ENCODE measurements at regions of chr14 and their contacts with region 1.

Region 1: DNA sequence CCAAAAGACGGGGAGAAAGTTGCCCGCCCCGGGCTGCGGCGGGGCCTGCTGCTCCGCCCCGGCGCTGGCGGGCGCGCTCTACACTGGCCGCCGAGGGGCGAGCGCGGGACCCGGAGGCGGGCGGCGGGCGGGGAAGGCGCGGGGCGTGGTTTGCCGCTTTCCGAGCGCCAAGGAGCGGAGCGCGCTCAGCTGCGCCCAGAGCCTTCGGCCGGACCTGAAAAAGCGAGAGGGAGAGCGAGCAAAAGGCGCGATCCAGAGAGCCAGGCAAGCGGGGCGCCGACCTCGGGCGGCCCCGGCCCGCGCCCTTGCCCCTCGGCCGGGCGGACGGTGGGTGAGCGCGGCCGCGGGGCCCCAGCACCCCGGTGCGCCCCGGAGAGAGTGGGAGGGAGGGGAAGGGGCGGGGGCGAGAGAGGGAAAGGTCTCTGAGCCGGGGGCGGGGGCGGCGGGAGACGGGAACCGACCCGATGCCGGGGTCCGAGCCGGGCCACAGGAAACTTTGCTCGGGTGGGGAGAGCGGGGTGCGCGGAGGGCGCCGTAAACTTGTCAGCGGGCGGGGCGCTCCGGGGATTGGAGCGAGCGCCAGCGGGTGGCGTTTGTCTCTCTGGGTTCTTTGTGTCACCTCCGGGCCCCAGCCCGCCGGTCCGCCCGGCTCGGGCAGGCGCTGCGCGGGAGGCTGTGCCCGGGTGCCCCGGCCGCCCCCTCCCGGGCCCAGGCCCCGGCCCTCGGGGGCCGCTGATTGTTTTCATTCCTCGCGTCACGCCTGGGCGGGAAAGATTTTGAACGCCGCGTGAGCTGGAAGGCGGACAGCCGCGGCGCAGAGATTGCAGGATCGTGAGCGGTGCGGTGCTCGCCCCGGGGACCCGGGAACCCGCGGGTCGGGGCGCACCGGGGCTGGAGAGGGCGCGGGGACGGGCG is at the start of gene SYNE2:
- DNase-seq: peak; percentile 67 to 89 (median 80)
- ATAC-seq: peak; percentile 90
- H3K4me3 ChIP-seq: peak within 1 kb of the TSS; percentile 52
- H3K4me3 Mint-ChIP-seq: peak within 1 kb of the TSS; percentile 85 to 99 (median 98)
- H3K27ac ChIP-seq: peak within 1 kb of the TSS; percentile 72
- H3K27ac Mint-ChIP-seq: peak within 1 kb of the TSS; percentile 77 to 98 (median 91)
- H3K4me1 ChIP-seq: peaks cover 29 to 39% of the 10 kb centered on the region in 2 donors
- H3K4me1 Mint-ChIP-seq: peaks cover 30 to 44% (median 42%) of the 10 kb centered on the region in 7 donors
- H3K27me3 ChIP-seq: no peaks in the 10 kb centered on the region
- H3K27me3 Mint-ChIP-seq: peaks cover 0 to 25% (median 0%) of the 10 kb centered on the region in 5 donors
- total RNA-seq, gene SYNE2: 77.7 to 170 (median 149) TPM

Region 2: GRCh38 chr14:63867933-63868921 is 15.2 kb after region 1 on chr14:
- CTCF ChIA-PET with region 1: interaction called, 3 read pairs
- POLR2A ChIA-PET with region 1: interaction called, 45 read pairs
- intact Hi-C with region 1: loop called (anchors 1 kb)
- DNase-seq: peak in 6 of 9 donors; percentile 15 to 44 (median 28)
- ATAC-seq: no peak
- H3K4me3 ChIP-seq: no peak overlapping the region
- H3K4me3 Mint-ChIP-seq: peak overlapping the region; percentile 46 to 84 (median 75)
- H3K27ac ChIP-seq: peak overlapping the region; percentile 36
- H3K27ac Mint-ChIP-seq: peak overlapping the region; percentile 84 to 98 (median 92)
- H3K4me1 ChIP-seq: peaks cover 36 to 60% of the 10 kb centered on the region in 2 donors
- H3K4me1 Mint-ChIP-seq: peaks cover 37 to 78% (median 64%) of the 10 kb centered on the region in 7 donors
- H3K27me3 ChIP-seq: no peaks in the 10 kb centered on the region
- H3K27me3 Mint-ChIP-seq: no peaks in the 10 kb centered on the region

Region 3: GRCh38 chr14:63887899-63888298 is 34.8 kb after region 1 on chr14:
- CTCF ChIA-PET with region 1: no interaction called
- POLR2A ChIA-PET with region 1: interaction called, 4 read pairs
- intact Hi-C with region 1: loop called in 1 of 2 experiments (anchors 5 kb)
- DNase-seq: no peak
- ATAC-seq: no peak
- H3K4me3 ChIP-seq: no peak overlapping the region
- H3K4me3 Mint-ChIP-seq: no peak overlapping the region
- H3K27ac ChIP-seq: no peak overlapping the region
- H3K27ac Mint-ChIP-seq: no peak overlapping the region
- H3K4me1 ChIP-seq: peaks cover 0 to 3% of the 10 kb centered on the region in 2 donors
- H3K4me1 Mint-ChIP-seq: peaks cover 10 to 32% (median 19%) of the 10 kb centered on the region in 7 donors
- H3K27me3 ChIP-seq: no peaks in the 10 kb centered on the region
- H3K27me3 Mint-ChIP-seq: no peaks in the 10 kb centered on the region

Region 4: DNA sequence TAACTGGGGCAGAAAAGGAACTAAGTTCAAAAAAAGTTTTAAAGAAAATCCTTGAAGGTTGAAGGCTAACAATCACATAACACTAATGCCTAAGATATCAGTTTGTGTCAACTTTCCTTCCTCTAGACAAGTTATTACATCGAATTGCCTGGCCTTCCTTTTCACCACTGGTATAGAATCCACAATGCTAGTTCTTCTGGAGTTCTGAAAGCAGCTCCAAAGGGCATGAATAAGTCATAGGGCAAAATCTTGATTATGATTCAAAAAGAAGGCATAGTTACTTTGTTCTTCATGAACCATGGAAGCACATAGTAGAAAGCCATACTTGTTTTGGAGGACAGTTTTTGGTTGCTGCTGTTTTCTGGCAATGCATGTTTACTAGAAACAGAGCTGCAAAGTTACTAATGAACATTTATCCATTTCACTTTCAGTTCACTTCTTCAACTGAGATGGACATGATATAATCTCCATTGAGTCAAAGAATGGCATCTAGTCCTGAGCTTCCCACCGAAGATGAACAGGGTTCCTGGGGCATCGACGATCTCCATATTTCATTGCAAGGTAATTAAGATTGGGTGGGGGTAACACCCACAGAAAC is 55.7 kb after region 1 on chr14:
- CTCF ChIA-PET with region 1: no interaction called
- POLR2A ChIA-PET with region 1: no interaction called
- intact Hi-C with region 1: loop called in 1 of 2 experiments (anchors 2 kb)
- DNase-seq: no peak
- ATAC-seq: no peak
- H3K4me3 ChIP-seq: no peak overlapping the region
- H3K4me3 Mint-ChIP-seq: peak overlapping the region in 9 of 10 donors; percentile 40 to 79 (median 71)
- H3K27ac ChIP-seq: no peak overlapping the region
- H3K27ac Mint-ChIP-seq: peak overlapping the region in 6 of 9 donors; percentile 4 to 79 (median 54)
- H3K4me1 ChIP-seq: peaks cover 0 to 14% of the 10 kb centered on the region in 2 donors
- H3K4me1 Mint-ChIP-seq: peaks cover 25 to 65% (median 48%) of the 10 kb centered on the region in 7 donors
- H3K27me3 ChIP-seq: no peaks in the 10 kb centered on the region
- H3K27me3 Mint-ChIP-seq: peaks cover 0 to 5% (median 0%) of the 10 kb centered on the region in 5 donors

Region 5: GRCh38 chr14:63993992-63994391 is 140.9 kb after region 1 on chr14:
- CTCF ChIA-PET with region 1: interaction called, 3 read pairs
- POLR2A ChIA-PET with region 1: no interaction called
- intact Hi-C with region 1: loop called (anchors 1 to 5 kb)
- DNase-seq: peak in 6 of 9 donors; percentile 17 to 36 (median 18)
- ATAC-seq: no peak
- H3K4me3 ChIP-seq: no peak overlapping the region
- H3K4me3 Mint-ChIP-seq: no peak overlapping the region
- H3K27ac ChIP-seq: no peak overlapping the region
- H3K27ac Mint-ChIP-seq: no peak overlapping the region
- H3K4me1 ChIP-seq: no peaks in the 10 kb centered on the region
- H3K4me1 Mint-ChIP-seq: peaks cover 0 to 12% (median 0%) of the 10 kb centered on the region in 7 donors
- H3K27me3 ChIP-seq: no peaks in the 10 kb centered on the region
- H3K27me3 Mint-ChIP-seq: no peaks in the 10 kb centered on the region

Region 6: GRCh38 chr14:64387694-64388532 is 534.8 kb after region 1 on chr14 and contains the start of gene MTHFD1:
- CTCF ChIA-PET with region 1: no interaction called
- POLR2A ChIA-PET with region 1: no interaction called
- intact Hi-C with region 1: loop called in 1 of 2 experiments (anchors 1 kb)
- DNase-seq: peak; percentile 93 to 97 (median 96)
- ATAC-seq: peak; percentile 90
- H3K4me3 ChIP-seq: peak within 1 kb of the TSS; percentile 89
- H3K4me3 Mint-ChIP-seq: peak within 1 kb of the TSS; percentile 92 to 99 (median 96)
- H3K27ac ChIP-seq: peak within 1 kb of the TSS; percentile 79
- H3K27ac Mint-ChIP-seq: peak within 1 kb of the TSS; percentile 90 to 99 (median 95)
- H3K4me1 ChIP-seq: peaks cover 11 to 17% of the 10 kb centered on the region in 2 donors
- H3K4me1 Mint-ChIP-seq: peaks cover 18 to 49% (median 41%) of the 10 kb centered on the region in 7 donors
- H3K27me3 ChIP-seq: no peaks in the 10 kb centered on the region
- H3K27me3 Mint-ChIP-seq: peaks cover 0 to 4% (median 0%) of the 10 kb centered on the region in 5 donors
- total RNA-seq, gene MTHFD1: 28.0 to 189 (median 30.2) TPM

Region 7: GRCh38 chr14:65019944-65020566 is 1167.0 kb after region 1 on chr14:
- CTCF ChIA-PET with region 1: no interaction called
- POLR2A ChIA-PET with region 1: no interaction called
- intact Hi-C with region 1: no loop called
- DNase-seq: peak in 2 of 9 donors; percentile 3 to 14
- ATAC-seq: peak; percentile 76
- H3K4me3 ChIP-seq: no peak overlapping the region
- H3K4me3 Mint-ChIP-seq: no peak overlapping the region
- H3K27ac ChIP-seq: no peak overlapping the region
- H3K27ac Mint-ChIP-seq: peak overlapping the region in 1 of 9 donors; percentile 0
- H3K4me1 ChIP-seq: no peaks in the 10 kb centered on the region
- H3K4me1 Mint-ChIP-seq: peaks cover 0 to 5% (median 0%) of the 10 kb centered on the region in 7 donors
- H3K27me3 ChIP-seq: no peaks in the 10 kb centered on the region
- H3K27me3 Mint-ChIP-seq: no peaks in the 10 kb centered on the region

Measured in naive thymus-derived CD4-positive, alpha-beta T cell (primary cell).